ENCODE measurements at regions of chr14 and their contacts with region 1.

Region 1: GRCh38 chr14:64764641-64765520 is 60.7 kb downstream of the PLEKHG3 start:
- DNase-seq: peak; percentile 74 to 85 (median 81)
- ATAC-seq: peak; percentile 71
- H3K4me3 ChIP-seq: no peak overlapping the region
- H3K4me1 ChIP-seq: peaks cover 20% of the 10 kb centered on the region
- CTCF ChIP-seq: peak; percentile 80

Region 2: GRCh38 chr14:64671591-64671990 is 93.3 kb before region 1 on chr14:
- intact Hi-C with region 1: loop called (anchors 5 kb)
- DNase-seq: peak in 1 of 3 donors; percentile 42
- ATAC-seq: peak; percentile 49
- H3K4me3 ChIP-seq: no peak overlapping the region
- H3K4me1 ChIP-seq: peaks cover 18% of the 10 kb centered on the region
- CTCF ChIP-seq: peak; percentile 45

Region 3: DNA sequence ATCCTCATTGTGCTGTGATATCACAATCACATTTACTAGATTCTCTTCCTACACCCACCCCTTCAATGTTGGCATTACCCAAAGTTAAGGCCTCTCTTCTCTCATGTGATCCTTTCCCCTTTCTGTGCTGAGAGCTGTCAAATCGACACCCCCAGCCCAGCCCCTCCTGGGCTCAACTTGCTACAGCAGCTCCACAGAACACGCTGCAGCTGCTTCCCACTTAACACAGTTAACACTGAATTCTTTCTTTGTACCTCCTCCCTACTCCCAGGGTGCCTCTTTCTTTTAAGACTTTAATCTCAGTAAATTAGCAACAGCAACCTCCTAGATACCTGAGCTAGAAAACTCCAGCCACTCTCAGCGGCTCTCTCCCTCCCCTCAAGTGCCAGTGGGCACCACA is 97.0 kb after region 1 on chr14:
- intact Hi-C with region 1: no loop called
- DNase-seq: no peak
- ATAC-seq: no peak
- H3K4me3 ChIP-seq: no peak overlapping the region
- H3K4me1 ChIP-seq: no peaks in the 10 kb centered on the region
- CTCF ChIP-seq: no peak